GM10248 (cell line): ENCODE measurements at regions of chr17 and their contacts with region 1.

Region 1: DNA sequence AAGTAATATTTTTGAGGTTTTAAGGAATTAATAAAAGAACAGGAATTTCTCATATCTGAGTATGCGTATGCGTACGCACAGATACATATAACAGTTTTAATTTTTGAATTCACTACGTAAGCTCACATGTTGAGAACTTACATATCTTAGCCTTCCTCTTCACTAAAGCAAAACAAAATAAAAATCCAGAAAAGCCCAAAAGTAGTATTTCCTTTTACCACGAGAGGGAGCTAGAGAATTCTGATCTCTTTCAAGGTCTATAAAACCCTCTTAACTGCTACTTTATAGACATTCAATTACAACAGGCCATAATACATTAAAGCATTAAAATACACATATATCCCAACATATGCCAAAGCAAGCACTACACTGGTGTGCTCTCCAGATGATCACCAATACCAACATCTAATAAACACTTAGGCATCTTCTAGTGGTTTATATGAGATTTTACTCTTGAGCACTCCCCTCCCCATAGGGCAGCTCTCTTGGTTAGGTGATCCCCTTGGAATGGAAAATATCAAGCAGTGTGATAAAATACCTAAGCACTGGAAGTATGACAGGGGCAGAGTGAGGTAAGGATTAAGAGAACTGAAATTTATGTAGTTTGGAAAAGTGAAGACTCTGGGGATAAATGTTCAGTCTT is 94.0 kb downstream of the SKAP1 start:
- DNase-seq: peak; percentile 37
- CTCF ChIP-seq: peak; percentile 43

Region 2: DNA sequence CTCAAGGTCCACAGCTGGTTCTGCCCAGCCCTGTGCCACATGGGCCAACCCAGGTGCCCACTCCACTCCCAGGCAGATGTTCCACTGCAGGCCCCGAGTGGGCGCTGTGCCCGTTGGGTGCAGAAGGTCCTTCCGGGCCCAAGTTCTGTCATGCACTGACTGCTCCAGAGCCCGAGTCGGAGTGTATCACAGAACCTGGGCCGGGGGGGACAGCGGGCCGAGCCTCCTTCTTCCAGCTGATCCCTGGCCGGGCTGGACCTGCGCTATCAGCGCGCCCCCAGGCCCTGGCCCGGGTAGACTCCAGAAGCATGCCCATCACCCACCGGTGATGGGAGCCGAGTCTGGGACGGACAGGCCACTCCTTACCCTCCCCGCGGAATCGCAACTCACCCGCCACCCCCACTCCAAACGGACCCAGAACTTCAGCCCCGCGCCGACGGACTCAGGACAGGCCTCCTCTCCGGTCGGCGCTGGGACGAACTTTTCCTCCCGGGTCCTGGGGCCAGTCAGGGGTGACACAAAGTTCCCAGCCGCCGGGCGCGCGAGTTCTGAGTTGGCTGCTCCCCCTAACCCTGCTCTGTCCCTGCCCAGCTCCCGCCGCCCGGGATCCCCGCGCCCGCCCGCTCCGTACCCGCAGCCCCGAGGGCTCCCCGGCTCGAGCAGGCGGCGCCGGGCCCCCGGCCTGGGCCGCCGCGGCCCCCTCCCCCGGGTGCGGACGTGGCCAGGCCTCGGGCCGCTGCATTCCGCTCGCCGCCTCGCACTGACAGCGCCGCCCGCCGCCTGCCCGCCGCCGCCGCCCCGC is 298.7 kb before region 1 on chr17 and contains the start of gene COPZ2:
- CTCF ChIA-PET with region 1: no interaction called
- POLR2A ChIA-PET with region 1: no interaction called
- DNase-seq: peak; percentile 63
- CTCF ChIP-seq: peak; percentile 73

Region 3: DNA sequence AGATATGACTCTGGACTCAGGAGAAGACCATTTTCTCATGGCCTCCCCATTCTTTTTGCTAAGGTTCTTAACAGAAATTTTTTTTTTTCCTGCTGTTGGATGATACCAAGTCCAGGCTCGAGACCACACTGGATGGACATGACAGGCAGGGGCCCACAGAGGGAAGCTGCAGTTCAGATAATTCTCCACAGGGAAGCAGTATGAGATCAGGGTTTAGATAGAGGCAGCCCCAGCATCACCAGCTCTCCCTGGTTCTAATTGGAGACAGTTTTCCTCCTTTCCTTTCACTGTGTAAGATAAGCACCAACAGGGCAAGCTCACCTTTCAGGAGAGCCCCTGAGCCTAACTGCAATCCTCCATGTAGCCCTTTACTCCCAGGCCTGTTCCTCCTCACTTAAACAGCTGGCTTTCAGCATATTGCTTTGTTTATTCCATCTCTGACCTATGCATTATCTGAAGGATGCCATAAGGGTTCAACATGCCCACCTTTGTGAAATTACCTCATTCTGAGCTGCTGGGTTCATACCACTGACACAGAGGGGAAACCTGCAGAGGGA is 120.3 kb before region 1 on chr17:
- CTCF ChIA-PET with region 1: interaction called, 12 read pairs
- POLR2A ChIA-PET with region 1: no interaction called
- DNase-seq: no peak
- CTCF ChIP-seq: peak; percentile 31

Region 4: DNA sequence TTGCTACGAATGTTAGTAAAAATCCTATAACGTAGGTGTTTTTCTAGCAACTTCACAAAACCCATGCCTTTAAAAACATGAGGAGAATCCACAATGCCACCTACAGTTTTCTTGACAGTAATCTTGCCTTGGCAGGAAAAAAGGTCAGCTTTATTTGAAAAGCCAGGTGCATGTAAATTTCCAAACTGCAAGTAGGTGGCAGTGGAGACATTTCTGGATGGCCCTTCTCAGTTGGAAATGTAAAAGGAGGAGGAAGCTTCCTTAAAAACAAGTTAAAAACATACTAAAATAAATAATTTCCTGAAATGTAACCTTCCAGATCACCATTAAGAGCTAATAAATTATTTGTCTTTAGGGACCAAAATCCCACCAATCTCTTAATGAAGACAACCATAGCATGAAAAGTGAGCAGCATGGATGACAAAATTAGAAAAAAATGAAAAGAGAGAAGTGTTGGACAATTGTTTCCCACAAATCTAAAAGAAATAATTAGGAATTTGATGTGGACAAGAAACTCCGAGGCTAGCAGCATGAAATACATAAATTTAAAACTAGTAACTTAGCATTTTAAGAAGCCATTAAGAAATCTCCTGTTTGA is 76.2 kb before region 1 on chr17:
- CTCF ChIA-PET with region 1: interaction called, 10 read pairs
- POLR2A ChIA-PET with region 1: no interaction called
- DNase-seq: no peak
- CTCF ChIP-seq: peak; percentile 45

Region 5: GRCh38 chr17:48294806-48295361 is 41.1 kb before region 1 on chr17:
- CTCF ChIA-PET with region 1: no interaction called
- POLR2A ChIA-PET with region 1: no interaction called
- DNase-seq: no peak
- CTCF ChIP-seq: no peak

Region 6: GRCh38 chr17:48307814-48308411 is 28.1 kb before region 1 on chr17:
- CTCF ChIA-PET with region 1: interaction called, 15 read pairs
- POLR2A ChIA-PET with region 1: no interaction called
- DNase-seq: peak; percentile 41
- CTCF ChIP-seq: peak; percentile 68

Region 7: DNA sequence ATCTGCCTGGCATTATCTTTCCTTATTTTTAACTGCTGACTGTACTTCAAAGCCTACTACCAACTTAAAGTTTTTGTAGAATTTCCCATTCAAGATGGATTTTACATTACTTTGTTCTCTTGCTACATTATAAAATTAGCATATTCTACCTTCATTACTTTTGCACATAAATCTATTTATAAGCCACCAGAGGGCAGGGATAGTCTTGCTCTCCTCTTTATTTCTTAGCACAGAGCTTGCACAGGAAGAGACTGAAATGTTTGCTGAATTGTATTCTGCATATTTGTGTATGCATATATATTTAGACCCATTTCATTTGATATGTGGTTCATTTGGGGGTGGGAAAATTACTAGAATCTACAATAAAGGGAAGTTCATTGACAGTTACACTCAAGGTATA is 13.9 kb before region 1 on chr17:
- CTCF ChIA-PET with region 1: interaction called, 54 read pairs
- POLR2A ChIA-PET with region 1: no interaction called
- DNase-seq: no peak
- CTCF ChIP-seq: no peak

Region 8: DNA sequence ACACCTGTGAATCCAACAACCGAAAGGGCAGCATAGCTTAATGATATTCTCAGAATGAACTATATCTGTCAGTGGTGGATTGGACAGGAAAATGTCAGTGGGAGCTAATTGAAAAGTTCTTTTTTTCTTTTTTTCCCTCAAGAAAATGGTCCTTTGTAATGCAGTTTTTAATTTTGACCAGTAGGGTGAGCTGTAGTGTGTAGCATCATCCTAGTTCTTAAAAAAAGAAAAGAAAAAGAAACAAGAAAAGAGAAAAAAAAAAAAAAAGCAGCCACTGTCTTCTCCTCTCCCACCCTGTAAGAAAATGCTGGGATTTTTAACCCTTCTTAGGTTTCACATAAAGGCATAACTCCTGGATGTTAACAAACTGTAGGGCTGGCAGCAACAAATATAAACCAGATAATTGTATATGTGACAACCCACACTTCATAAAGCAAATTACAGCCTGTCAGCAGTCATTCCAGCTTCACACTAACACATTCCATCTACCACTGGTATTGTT is 15.9 kb after region 1 on chr17:
- CTCF ChIA-PET with region 1: interaction called, 26 read pairs
- POLR2A ChIA-PET with region 1: no interaction called
- DNase-seq: peak; percentile 36
- CTCF ChIP-seq: peak; percentile 62

Region 9: GRCh38 chr17:48586355-48587258 is 250.6 kb after region 1 on chr17:
- CTCF ChIA-PET with region 1: interaction called, 51 read pairs
- POLR2A ChIA-PET with region 1: no interaction called
- DNase-seq: peak; percentile 74
- CTCF ChIP-seq: no peak